ENCODE measurements at regions of chr16 and their contacts with region 1.

Region 1: DNA sequence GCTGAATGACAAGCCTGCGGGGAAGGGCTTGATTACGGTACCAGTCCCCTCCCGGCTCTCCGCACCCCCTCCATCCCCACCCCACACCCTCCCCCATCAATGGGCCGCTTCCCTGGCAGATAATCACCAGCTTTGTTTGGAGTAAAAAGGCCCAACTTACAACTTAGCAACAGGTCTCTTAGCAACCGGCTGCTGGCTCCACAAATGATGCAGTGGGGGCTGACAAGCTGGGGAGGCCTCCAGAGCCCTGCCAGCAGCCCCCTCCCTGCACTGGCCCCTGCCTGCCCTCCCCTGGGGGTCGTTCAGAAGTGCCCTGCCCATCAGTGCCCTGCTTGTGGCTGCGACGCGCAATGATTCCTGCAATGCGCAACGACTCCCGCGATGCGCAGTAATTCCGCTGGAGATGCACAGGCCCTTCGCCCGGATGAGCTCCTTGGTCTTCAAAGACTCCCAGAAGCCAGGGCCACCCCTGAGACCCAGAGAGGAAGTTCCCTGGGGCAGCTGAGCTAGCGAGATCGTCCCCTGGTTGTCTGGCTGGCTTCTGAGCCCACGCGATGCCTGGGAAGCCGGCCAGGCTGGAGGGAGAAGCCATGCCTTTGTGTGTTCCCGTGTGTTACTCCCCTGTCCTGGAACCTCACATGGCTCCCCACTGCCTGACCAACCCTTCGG is 23.3 kb downstream of the CPNE2 start:
- DNase-seq: no peak
- H3K4me3 ChIP-seq: no peak overlapping the region
- H3K27ac ChIP-seq: no peak overlapping the region
- H3K4me1 ChIP-seq: no peaks in the 10 kb centered on the region
- H3K27me3 ChIP-seq: no peaks in the 10 kb centered on the region
- CTCF ChIP-seq: no peak

Region 2: GRCh38 chr16:57145046-57146021 is 29.7 kb after region 1 on chr16:
- CTCF ChIA-PET with region 1: no interaction called
- POLR2A ChIA-PET with region 1: interaction called, 11 read pairs
- intact Hi-C with region 1: no loop called
- DNase-seq: no peak
- H3K4me3 ChIP-seq: no peak overlapping the region
- H3K27ac ChIP-seq: no peak overlapping the region
- H3K4me1 ChIP-seq: no peaks in the 10 kb centered on the region
- H3K27me3 ChIP-seq: no peaks in the 10 kb centered on the region
- CTCF ChIP-seq: no peak